Activated CD8-positive, alpha-beta T cell treated with anti-CD3 and anti-CD28 coated beads, Interleukin-2, amount 10 ng/mL, durations not matched to agents 7 days and 5 days (primary cell): ENCODE measurements at regions of chr17 and their contacts with region 1.

Region 1: GRCh38 chr17:19362277-19363113 is at the start of gene B9D1:
- DNase-seq: peak; percentile 93
- ATAC-seq: peak; percentile 89
- H3K4me3 Mint-ChIP-seq: peak within 1 kb of the TSS; percentile 79
- H3K27ac Mint-ChIP-seq: peak within 1 kb of the TSS; percentile 70
- H3K4me1 Mint-ChIP-seq: peaks cover 11% of the 10 kb centered on the region
- H3K27me3 Mint-ChIP-seq: peaks cover 34% of the 10 kb centered on the region
- total RNA-seq, gene B9D1: 1.1 TPM

Region 2: GRCh38 chr17:19274893-19275292 is 87.6 kb before region 1 on chr17:
- CTCF ChIA-PET with region 1: no interaction called
- POLR2A ChIA-PET with region 1: no interaction called
- DNase-seq: no peak
- ATAC-seq: no peak
- H3K4me3 Mint-ChIP-seq: no peak overlapping the region
- H3K27ac Mint-ChIP-seq: no peak overlapping the region
- H3K4me1 Mint-ChIP-seq: no peaks in the 10 kb centered on the region
- H3K27me3 Mint-ChIP-seq: peaks cover 26% of the 10 kb centered on the region

Region 3: GRCh38 chr17:19306160-19307111 is 56.1 kb before region 1 on chr17:
- CTCF ChIA-PET with region 1: interaction called, 15 read pairs
- POLR2A ChIA-PET with region 1: no interaction called
- DNase-seq: peak; percentile 44
- ATAC-seq: peak; percentile 80
- H3K4me3 Mint-ChIP-seq: no peak overlapping the region
- H3K27ac Mint-ChIP-seq: no peak overlapping the region
- H3K4me1 Mint-ChIP-seq: peaks cover 31% of the 10 kb centered on the region
- H3K27me3 Mint-ChIP-seq: peaks cover 17% of the 10 kb centered on the region

Region 4: DNA sequence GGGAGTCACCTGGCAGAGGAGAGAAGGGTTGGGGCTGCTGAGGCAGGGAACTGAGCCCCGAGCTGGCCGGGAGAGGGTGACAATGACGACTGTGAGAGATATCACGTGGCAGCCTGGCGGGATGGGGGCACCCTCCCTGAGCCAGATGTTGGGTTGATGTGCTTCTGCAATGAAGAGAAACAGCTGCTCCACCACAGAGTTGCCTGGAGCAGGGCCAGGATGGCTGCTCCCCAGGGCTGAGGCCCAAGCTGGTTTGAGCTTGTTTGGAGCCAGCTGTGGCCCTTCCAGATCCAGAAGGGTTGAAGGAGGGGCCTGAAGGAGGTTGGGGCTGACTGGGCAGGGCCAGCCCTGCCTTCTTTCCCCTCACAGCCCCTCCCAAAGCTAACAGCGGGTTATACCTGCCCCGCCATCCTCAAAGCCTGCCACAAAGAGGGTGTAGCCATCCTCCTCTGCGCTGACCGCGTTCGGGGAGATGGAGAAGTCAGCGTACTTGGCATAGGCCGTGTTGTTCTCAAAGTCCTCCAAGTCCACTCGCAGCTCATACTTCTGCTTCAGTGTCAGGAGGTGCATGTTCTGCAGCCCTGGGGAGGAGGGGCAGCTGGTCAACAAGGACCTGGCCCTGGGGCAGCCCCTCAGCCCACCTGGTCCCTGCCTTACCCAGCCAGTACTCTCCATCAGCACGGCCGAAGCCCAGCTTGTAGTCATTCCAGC is 22.4 kb after region 1 on chr17:
- CTCF ChIA-PET with region 1: interaction called, 14 read pairs
- POLR2A ChIA-PET with region 1: no interaction called
- DNase-seq: no peak
- ATAC-seq: no peak
- H3K4me3 Mint-ChIP-seq: no peak overlapping the region
- H3K27ac Mint-ChIP-seq: no peak overlapping the region
- H3K4me1 Mint-ChIP-seq: peaks cover 5% of the 10 kb centered on the region
- H3K27me3 Mint-ChIP-seq: peaks cover 8% of the 10 kb centered on the region

Region 5: GRCh38 chr17:19398301-19399181 is 36.0 kb after region 1 on chr17:
- CTCF ChIA-PET with region 1: no interaction called
- POLR2A ChIA-PET with region 1: no interaction called
- DNase-seq: no peak
- ATAC-seq: no peak
- H3K4me3 Mint-ChIP-seq: no peak overlapping the region
- H3K27ac Mint-ChIP-seq: no peak overlapping the region
- H3K4me1 Mint-ChIP-seq: peaks cover 2% of the 10 kb centered on the region
- H3K27me3 Mint-ChIP-seq: peaks cover 18% of the 10 kb centered on the region

Region 6: DNA sequence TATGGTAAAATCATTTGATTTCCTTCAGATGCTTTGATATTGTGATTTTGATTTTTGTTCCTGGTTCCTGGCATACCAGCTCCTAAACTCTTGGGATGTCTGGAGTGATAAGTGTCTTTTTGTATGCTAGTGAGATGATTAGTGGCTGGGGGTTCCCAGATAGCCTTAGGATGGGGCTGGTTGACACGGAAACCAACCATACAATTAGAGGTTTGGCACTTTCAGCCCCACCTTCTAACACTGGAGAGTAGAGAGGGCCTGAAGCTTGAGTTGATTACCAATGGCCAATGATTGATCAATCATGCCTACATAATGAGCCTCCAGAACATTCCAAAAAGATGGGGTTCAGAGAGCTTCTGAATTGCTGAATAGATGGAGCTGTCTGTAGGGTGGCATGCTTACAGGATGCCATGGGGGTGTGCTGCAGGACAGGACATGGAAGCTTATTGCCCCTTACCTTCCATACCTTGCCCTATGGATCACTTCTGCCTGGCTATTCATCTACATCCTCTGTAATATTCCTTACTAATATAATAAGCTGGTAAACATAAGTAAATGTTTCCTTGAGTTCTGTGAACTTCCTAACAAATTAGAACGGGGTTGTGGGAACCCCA is 71.3 kb after region 1 on chr17:
- CTCF ChIA-PET with region 1: interaction called, 12 read pairs
- POLR2A ChIA-PET with region 1: no interaction called
- DNase-seq: no peak
- ATAC-seq: no peak
- H3K4me3 Mint-ChIP-seq: no peak overlapping the region
- H3K27ac Mint-ChIP-seq: no peak overlapping the region
- H3K4me1 Mint-ChIP-seq: no peaks in the 10 kb centered on the region
- H3K27me3 Mint-ChIP-seq: peaks cover 20% of the 10 kb centered on the region

Region 7: GRCh38 chr17:19464031-19465026 is 101.8 kb after region 1 on chr17:
- CTCF ChIA-PET with region 1: interaction called, 13 read pairs
- POLR2A ChIA-PET with region 1: no interaction called
- DNase-seq: no peak
- ATAC-seq: no peak
- H3K4me3 Mint-ChIP-seq: no peak overlapping the region
- H3K27ac Mint-ChIP-seq: no peak overlapping the region
- H3K4me1 Mint-ChIP-seq: peaks cover 26% of the 10 kb centered on the region
- H3K27me3 Mint-ChIP-seq: no peaks in the 10 kb centered on the region

Region 8: DNA sequence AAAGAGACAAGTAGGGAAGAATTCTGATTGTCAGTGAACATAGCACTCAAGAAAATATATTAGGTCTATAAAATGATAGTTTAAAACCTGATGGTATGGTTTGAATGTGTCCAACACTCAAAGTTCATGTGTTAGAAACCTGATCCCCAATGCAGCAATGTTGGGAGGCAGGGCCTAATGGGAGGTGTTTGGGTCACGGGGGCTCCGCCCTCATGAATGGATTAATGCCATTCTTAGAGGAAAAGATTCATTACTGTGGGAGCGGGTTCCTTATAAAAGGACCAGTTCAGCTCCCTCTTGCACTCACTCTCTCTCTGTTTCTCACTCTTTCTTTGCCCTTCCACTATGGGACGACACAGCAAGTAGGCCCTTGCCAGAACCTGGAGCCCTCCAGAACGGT is 129.6 kb after region 1 on chr17:
- CTCF ChIA-PET with region 1: no interaction called
- POLR2A ChIA-PET with region 1: no interaction called
- DNase-seq: no peak
- ATAC-seq: no peak
- H3K4me3 Mint-ChIP-seq: no peak overlapping the region
- H3K27ac Mint-ChIP-seq: no peak overlapping the region
- H3K4me1 Mint-ChIP-seq: no peaks in the 10 kb centered on the region
- H3K27me3 Mint-ChIP-seq: no peaks in the 10 kb centered on the region

Region 9: DNA sequence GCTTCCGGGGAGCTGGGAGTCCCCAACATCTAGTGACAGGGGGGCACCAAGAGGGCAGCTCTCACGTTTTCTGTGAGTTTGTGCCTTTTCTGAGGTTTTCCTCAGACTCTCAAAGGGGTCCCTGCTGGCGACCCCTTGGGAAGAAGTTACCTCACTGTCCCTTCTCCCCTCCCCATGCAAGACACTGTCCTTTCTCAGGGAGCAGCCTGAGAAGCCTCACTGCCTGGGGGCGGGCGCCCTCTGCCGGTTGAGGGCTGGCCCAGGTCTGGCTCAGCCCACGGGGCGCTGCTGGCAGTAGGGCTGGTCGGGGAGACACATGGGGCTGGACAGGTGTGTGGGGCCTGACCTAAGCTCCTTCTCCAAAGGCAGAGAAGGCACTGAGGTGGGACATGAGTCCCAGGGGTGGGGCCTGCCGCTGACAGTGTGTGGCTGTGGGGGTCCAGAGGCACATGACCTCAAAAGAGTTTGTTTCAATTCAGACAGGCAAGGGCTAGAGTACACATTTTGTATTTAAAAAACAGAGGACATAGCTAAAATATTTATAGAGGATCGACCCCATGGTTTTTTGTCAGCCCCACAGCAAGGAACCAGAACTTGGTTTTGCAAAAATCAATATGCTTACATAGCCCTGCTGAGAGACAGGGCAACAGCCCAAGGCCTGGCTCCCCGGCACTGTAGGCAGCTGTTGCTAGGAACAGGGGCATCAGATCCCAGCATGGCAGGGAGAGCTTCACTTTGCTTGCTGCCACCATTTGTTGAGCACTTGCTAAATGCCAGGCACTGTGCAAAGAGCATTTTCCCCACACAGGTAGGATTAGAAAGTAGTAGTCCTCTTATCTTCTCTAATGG is 404.2 kb after region 1 on chr17:
- CTCF ChIA-PET with region 1: interaction called, 16 read pairs
- POLR2A ChIA-PET with region 1: no interaction called
- DNase-seq: peak; percentile 76
- ATAC-seq: peak; percentile 96
- H3K4me3 Mint-ChIP-seq: no peak overlapping the region
- H3K27ac Mint-ChIP-seq: no peak overlapping the region
- H3K4me1 Mint-ChIP-seq: peaks cover 8% of the 10 kb centered on the region
- H3K27me3 Mint-ChIP-seq: no peaks in the 10 kb centered on the region